Motor neuron (in vitro differentiated cells): ENCODE measurements at regions of chr20 and their contacts with region 1.

Region 1: GRCh38 chr20:53594068-53595017 is 704 bp upstream of the ZNF217 start:
- ATAC-seq: peak; percentile 65 to 88 (median 86)
- H3K4me3 ChIP-seq: peak overlapping the region; percentile 51 to 65 (median 60)
- H3K27ac ChIP-seq: peak overlapping the region; percentile 67 to 84
- H3K4me1 ChIP-seq: peaks cover 12 to 32% of the 10 kb centered on the region in 2 donors

Region 2: GRCh38 chr20:53245574-53245973 is 348.8 kb before region 1 on chr20:
- in situ Hi-C with region 1: no loop called
- ATAC-seq: peak in 4 of 8 experiments; percentile 49 to 94 (median 50)
- H3K4me3 ChIP-seq: no peak overlapping the region
- H3K27ac ChIP-seq: no peak overlapping the region
- H3K4me1 ChIP-seq: peaks cover 21 to 24% of the 10 kb centered on the region in 2 donors

Region 3: GRCh38 chr20:53331151-53331973 is 263.0 kb before region 1 on chr20:
- in situ Hi-C with region 1: no loop called
- ATAC-seq: peak; percentile 92 to 99 (median 96)
- H3K4me3 ChIP-seq: no peak overlapping the region
- H3K27ac ChIP-seq: peak overlapping the region in 1 of 2 donors; percentile 48
- H3K4me1 ChIP-seq: peaks cover 0 to 11% of the 10 kb centered on the region in 2 donors

Region 4: DNA sequence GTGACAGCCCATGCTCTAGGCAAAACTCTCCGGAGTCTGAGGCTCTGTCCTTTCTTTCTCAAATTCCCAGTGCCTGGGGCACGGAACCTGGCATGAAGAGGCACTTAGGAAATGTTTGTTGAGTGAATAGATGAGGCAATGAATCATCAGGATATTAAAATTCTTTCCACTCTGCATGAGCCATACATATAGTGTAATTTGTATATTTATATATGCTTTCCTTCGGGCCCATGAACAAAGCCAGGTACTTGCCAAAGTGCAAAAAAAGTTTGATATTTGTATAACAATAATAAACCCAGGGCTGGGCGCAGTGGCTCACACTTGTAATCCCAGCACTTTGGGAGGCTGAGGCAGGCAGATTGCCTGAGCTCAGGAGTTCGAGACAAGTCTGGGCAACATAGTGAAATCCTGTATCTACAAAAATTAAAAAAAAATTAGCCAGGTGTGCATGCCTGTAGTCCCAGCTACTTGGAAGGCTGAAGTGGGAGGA is 211.6 kb after region 1 on chr20:
- in situ Hi-C with region 1: loop called in 1 of 9 experiments (anchors 25 kb)
- ATAC-seq: peak in 3 of 8 experiments; percentile 87 to 94 (median 90)
- H3K4me3 ChIP-seq: no peak overlapping the region
- H3K27ac ChIP-seq: no peak overlapping the region
- H3K4me1 ChIP-seq: no peaks in the 10 kb centered on the region

Region 5: GRCh38 chr20:53915446-53916172 is 321.3 kb after region 1 on chr20:
- in situ Hi-C with region 1: loop called in 1 of 9 experiments (anchors 25 kb)
- ATAC-seq: peak; percentile 64 to 96 (median 90)
- H3K4me3 ChIP-seq: peak overlapping the region; percentile 34 to 55 (median 36)
- H3K27ac ChIP-seq: peak overlapping the region; percentile 62 to 80
- H3K4me1 ChIP-seq: peaks cover 27 to 31% of the 10 kb centered on the region in 2 donors

Region 6: GRCh38 chr20:53939572-53940359 is 345.4 kb after region 1 on chr20:
- in situ Hi-C with region 1: loop called in 5 of 9 experiments (anchors 25 kb)
- ATAC-seq: peak; percentile 73 to 87 (median 86)
- H3K4me3 ChIP-seq: peak overlapping the region in 4 of 5 donors; percentile 17 to 30 (median 22)
- H3K27ac ChIP-seq: peak overlapping the region; percentile 5 to 55
- H3K4me1 ChIP-seq: peaks cover 33% of the 10 kb centered on the region in 2 donors

Region 7: DNA sequence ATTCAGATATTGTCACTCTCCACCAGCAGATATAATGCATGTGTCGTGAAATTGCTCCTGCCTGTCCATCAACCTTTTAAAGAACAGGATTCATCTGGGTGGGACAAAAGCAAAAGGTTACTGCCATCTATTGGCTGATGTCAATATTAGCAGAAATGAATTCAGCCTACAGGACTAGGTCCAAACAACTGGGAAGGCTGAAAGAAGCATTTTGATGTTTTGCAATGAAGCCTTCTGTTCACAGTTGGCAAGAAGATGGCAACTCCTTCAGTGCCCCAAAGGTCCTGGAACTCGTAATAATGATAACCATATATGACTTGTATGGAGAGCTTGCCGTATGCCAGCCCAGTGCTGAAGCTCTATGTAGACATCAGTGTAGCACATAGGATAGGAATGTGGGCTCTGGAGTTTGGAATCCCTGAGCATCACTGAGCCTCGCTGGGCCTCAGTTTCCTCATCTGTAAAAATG is 468.5 kb after region 1 on chr20:
- in situ Hi-C with region 1: loop called in 4 of 9 experiments (anchors 25 kb)
- ATAC-seq: peak; percentile 54 to 84 (median 64)
- H3K4me3 ChIP-seq: no peak overlapping the region
- H3K27ac ChIP-seq: no peak overlapping the region
- H3K4me1 ChIP-seq: peaks cover 6 to 10% of the 10 kb centered on the region in 2 donors

Region 8: GRCh38 chr20:54199721-54200176 is 605.4 kb after region 1 on chr20:
- in situ Hi-C with region 1: loop called in 1 of 9 experiments (anchors 25 kb)
- ATAC-seq: peak in 6 of 8 experiments; percentile 29 to 85 (median 74)
- H3K4me3 ChIP-seq: no peak overlapping the region
- H3K27ac ChIP-seq: no peak overlapping the region
- H3K4me1 ChIP-seq: peaks cover 0 to 5% of the 10 kb centered on the region in 2 donors